ENCODE measurements at regions of chr9 and their contacts with region 1.

Region 1: GRCh38 chr9:74952281-74953151 is at the start of gene C9orf40:
- DNase-seq: peak; percentile 92
- ATAC-seq: peak; percentile 97 to 99
- total RNA-seq, gene C9orf40: 2.6 to 4.5 TPM

Region 2: DNA sequence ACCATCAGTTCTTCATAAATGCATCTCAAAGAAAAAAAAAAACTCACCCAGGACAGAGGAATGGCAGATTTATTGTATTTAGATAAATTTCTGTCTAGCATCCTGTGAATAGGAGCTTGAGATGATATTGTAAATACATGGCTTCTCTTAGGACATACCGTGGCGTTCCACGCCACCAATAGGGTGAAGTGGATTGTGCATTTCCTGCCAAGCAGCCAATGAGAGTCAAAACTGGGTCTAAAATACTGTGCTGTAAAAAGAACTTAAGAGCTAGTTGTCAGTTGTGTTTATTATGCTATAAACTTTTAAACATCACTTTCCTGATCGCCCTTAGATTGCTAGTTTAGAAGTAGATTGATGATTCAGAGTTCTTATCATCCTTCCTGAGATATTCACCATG is 43.9 kb before region 1 on chr9:
- intact Hi-C with region 1: no loop called
- DNase-seq: no peak
- ATAC-seq: no peak

Region 3: GRCh38 chr9:75088260-75088905 is 135.9 kb after region 1 on chr9 and contains the start of gene OSTF1:
- intact Hi-C with region 1: loop called in 1 of 2 experiments (anchors 10 kb)
- DNase-seq: peak; percentile 97
- ATAC-seq: peak; percentile 96
- total RNA-seq, gene OSTF1: 32.7 to 35.7 TPM